ENCODE measurements at regions of chr11 and their contacts with region 1.

Region 1: GRCh38 chr11:66677599-66678375 is at the start of gene RBM4B:
- DNase-seq: peak; percentile 99
- ATAC-seq: peak; percentile 98
- total RNA-seq, gene RBM4B: 13.1 TPM

Region 2: GRCh38 chr11:66418168-66418985 is 259.4 kb before region 1 on chr11:
- intact Hi-C with region 1: loop called (anchors 10 kb)
- DNase-seq: peak; percentile 85
- ATAC-seq: peak; percentile 96

Region 3: GRCh38 chr11:66579017-66579606 is 98.7 kb before region 1 on chr11:
- intact Hi-C with region 1: loop called (anchors 5 kb)
- DNase-seq: peak; percentile 90
- ATAC-seq: peak; percentile 95

Region 4: GRCh38 chr11:66749070-66749469 is 71.3 kb after region 1 on chr11:
- intact Hi-C with region 1: no loop called
- DNase-seq: no peak
- ATAC-seq: no peak

Region 5: DNA sequence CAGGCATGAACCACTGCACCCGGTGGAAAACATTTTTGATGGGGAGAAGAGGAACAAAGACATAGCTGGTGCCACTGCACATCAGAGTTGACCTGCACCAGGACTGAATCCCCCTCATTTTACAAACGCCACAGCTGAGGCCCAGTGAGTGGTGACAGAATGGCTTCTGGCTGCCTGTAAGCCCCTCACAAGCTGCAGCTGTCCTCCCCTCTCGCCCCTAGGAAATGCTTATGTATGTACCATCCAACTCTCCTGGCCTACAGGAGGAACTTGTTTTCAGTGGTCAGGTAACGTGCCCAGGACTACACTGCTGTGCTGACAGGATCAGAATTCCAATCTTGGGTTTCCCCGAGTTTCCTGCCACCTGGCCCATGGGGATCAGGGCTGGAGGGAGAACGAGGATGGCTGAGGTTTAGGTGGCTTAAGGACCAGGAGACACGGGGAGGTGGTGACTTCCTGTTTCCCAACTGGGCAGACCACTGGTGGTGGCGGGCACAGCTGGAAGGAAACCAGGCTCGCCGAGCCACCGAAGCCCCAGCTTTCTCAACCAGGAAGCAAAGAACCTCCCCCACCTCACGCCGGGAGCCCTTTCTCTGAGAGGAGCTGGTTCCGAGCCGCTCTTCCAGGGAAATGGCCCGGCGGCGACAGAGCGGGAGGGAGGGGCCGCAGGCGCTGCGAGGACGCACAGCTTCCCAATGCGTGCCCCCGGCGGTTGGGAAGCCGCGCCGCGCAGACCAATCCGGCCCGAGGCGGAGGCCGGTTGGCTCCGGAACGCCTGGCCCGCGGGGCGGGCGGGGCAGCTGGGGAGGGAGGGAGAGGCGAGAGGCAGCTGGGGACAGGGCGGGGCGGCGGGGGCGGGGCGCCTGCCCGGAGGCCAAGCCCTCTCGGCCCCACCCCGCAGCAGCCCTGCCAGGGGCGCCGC is 178.0 kb after region 1 on chr11:
- intact Hi-C with region 1: no loop called
- DNase-seq: peak; percentile 98
- ATAC-seq: peak; percentile 95